OCI-LY7 (cell line): ENCODE measurements at regions of chr12 and their contacts with region 1.

Region 1: DNA sequence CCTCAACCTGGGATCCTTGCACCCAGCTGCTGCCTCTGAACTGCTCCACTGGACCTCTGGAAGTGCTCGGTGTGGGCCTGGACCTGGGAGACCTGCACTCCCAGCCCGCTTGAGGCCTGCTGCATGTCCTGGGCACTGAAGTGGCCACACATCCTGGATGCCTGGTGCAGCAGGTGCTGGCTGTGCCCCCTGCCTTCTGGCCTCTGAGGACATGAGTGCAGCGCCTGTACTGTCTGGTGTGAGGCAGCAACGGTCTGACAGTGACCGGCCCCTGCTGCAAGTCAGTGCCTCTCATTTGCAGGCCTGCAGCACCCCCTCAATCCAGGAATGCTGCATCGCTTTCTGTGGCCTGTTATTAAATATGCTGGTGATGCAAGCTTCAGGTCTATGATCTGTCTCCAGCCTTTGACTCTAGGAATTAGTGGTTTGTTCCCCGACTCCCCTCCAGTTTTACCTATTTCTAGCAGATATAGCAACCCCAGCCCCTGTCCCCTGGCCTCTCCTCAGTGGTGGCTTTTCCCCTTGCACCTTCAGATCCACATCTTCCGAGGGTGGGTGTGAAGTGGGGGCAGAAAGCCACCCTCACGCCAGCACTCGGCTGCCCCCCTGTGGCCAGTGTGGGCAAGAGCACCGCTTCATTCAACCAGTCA is 3.6 kb downstream of the SMIM41 start:
- DNase-seq: peak; percentile 80
- H3K4me3 ChIP-seq: no peak overlapping the region
- H3K27ac ChIP-seq: peak overlapping the region; percentile 84
- H3K4me1 ChIP-seq: peaks cover 68% of the 10 kb centered on the region
- CTCF ChIP-seq: peak; percentile 100

Region 2: DNA sequence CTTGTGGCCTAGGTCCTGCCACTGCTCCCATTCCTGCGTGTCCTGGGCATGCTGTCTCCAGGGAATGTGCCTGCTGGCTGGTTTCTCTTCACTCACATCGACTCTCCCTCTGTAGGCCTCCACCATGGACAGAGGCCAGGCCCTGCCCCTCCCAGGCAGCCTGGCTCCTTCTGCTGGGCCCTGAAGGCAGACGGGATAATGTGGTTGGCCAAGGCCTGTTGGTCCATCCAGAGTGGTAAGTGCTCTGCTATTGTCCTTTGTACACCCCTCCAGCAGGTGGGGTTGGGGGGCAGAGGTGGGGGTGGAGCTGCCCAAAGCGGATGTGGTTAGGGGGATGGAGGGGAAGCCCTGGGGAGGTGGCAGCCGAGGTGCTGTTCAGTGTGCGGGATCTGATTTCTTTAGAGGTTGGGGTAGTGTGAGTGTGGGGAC is 41.4 kb before region 1 on chr12:
- CTCF ChIA-PET with region 1: interaction called, 3 read pairs
- POLR2A ChIA-PET with region 1: interaction called, 3 read pairs
- intact Hi-C with region 1: loop called (anchors 1 kb)
- DNase-seq: peak; percentile 87
- H3K4me3 ChIP-seq: peak overlapping the region; percentile 64
- H3K27ac ChIP-seq: peak overlapping the region; percentile 69
- H3K4me1 ChIP-seq: peaks cover 62% of the 10 kb centered on the region
- CTCF ChIP-seq: peak; percentile 72

Region 3: GRCh38 chr12:52069327-52070184 is 13.6 kb before region 1 on chr12 and contains the start of gene ATG101:
- CTCF ChIA-PET with region 1: interaction called, 3 read pairs
- POLR2A ChIA-PET with region 1: interaction called, 8 read pairs
- intact Hi-C with region 1: loop called (anchors 1 kb)
- DNase-seq: peak; percentile 98
- H3K4me3 ChIP-seq: peak within 1 kb of the TSS; percentile 91
- H3K27ac ChIP-seq: peak within 1 kb of the TSS; percentile 73
- H3K4me1 ChIP-seq: peaks cover 39% of the 10 kb centered on the region
- CTCF ChIP-seq: peak; percentile 81
- total RNA-seq, gene ATG101: 53.9 and 65.5 TPM in 2 replicates

Region 4: DNA sequence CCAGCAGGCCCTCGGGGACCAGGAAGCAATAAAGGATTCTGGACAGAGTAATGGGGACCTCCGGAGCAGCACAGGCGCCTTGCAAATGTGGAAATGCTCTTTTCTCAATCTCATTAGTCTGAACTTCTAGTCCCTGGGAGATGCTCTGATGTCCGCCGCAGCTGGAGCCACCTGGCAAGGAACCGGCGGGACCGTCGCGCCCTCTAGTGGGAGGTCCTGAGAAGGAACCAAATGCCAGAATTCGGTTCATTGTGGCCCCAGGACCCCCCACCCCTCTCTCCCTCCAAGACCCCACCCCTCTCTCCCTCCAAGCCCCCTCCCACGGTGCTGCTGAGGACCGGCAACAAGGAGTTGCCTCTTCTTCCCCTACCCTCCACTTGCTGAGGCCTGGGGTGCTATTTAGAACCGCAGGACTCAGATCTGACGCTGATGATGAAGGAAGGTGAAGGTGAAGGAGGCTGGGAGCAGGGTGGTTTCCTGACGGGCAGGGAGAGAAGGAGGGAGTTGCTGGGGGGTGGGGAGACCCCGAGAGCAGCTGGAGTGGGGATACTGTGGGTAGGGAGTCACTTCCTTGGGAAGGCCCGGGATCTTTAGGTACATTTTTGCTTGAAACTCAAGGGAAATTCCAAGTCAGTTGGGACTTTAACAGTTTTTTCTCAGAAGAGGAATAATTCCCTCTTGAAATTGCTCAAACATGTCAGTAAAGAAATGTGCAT is 38.9 kb after region 1 on chr12:
- CTCF ChIA-PET with region 1: interaction called, 6 read pairs
- POLR2A ChIA-PET with region 1: interaction called, 13 read pairs
- intact Hi-C with region 1: loop called (anchors 1 kb)
- DNase-seq: peak; percentile 86
- H3K4me3 ChIP-seq: peak overlapping the region; percentile 27
- H3K27ac ChIP-seq: peak overlapping the region; percentile 41
- H3K4me1 ChIP-seq: peaks cover 70% of the 10 kb centered on the region
- CTCF ChIP-seq: peak; percentile 89

Region 5: DNA sequence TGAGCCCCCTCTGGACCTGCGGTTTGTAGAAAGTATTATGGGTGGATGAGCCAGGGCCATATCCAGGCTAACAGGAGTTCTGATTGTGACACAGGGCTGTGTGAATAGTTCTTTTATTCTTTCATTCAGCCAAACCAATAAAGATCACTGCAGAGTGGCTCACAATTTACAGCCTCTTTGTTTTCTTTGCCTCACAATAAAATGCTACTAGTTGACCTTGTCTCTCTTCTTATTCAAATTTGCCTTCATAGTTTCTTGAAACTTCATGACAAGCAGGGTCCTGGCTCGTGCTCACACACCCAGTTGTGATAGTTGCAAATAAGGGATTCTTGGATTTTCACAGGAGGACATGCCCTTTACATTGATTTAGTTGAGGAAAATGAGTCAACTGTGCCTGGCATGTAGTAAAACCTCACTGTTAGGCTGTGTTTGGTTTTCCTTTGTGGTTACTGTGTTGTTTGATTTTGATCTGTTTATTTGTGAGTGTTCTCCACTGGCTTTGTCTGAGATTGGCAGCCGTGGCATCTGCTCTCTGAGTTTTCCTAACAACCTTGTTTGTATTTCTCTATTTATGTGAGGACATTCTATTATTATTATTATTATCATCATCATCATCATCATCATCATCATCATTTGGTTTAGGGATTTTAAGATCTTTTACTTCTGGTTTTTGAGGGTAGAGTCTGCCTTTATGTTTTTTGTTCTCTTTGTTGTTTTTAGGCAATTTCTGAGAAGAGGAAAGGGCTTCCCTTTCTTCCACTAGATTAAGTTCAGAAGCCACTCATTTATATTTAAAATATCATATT is 371.5 kb after region 1 on chr12:
- CTCF ChIA-PET with region 1: no interaction called
- POLR2A ChIA-PET with region 1: no interaction called
- intact Hi-C with region 1: no loop called
- DNase-seq: no peak
- H3K4me3 ChIP-seq: no peak overlapping the region
- H3K27ac ChIP-seq: no peak overlapping the region
- H3K4me1 ChIP-seq: no peaks in the 10 kb centered on the region
- CTCF ChIP-seq: no peak